HEK293 (cell line): ENCODE measurements at regions of chr15 and their contacts with region 1.

Region 1: GRCh38 chr15:94412979-94413746 is 181.8 kb downstream of the MCTP2 start:
- H3K4me3 ChIP-seq: no peak overlapping the region
- H3K27ac ChIP-seq: no peak overlapping the region
- H3K4me1 ChIP-seq: peaks cover 53% of the 10 kb centered on the region
- CTCF ChIP-seq: no peak

Region 2: DNA sequence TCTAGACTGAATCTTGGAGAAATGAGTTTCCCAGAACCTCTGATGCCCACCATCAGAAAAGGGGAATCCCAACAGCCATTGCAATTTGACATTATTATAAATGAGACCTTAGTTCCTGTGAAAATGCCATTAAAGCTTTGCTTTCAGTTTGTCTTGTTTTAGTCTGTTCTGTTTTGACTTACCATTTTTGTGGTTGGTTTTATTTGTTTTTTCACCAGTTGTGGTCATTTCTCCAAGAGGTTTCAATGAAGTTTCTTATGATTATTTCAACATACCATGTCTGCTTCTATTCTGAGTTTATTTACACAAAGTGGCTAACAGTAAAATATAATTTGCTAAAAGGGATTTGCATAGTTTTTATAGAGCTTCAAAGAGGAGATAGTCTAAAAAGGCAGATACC is 356.8 kb before region 1 on chr15:
- CTCF ChIA-PET with region 1: no interaction called
- POLR2A ChIA-PET with region 1: no interaction called
- H3K4me3 ChIP-seq: no peak overlapping the region
- H3K27ac ChIP-seq: peak overlapping the region; percentile 19; the same call in 1 of the 2 replicates
- H3K4me1 ChIP-seq: peaks cover 12% of the 10 kb centered on the region
- CTCF ChIP-seq: no peak

Region 3: GRCh38 chr15:94670438-94671034 is 257.4 kb after region 1 on chr15:
- CTCF ChIA-PET with region 1: interaction called, 29 read pairs
- POLR2A ChIA-PET with region 1: no interaction called
- H3K4me3 ChIP-seq: no peak overlapping the region
- H3K27ac ChIP-seq: no peak overlapping the region
- H3K4me1 ChIP-seq: peaks cover 10% of the 10 kb centered on the region
- CTCF ChIP-seq: no peak